ENCODE measurements at regions of chr3 and their contacts with region 1.

Region 1: GRCh38 chr3:119240591-119241434 is at the start of gene B4GALT4:
- DNase-seq: peak; percentile 94
- total RNA-seq, gene B4GALT4: 13.2 TPM

Region 2: DNA sequence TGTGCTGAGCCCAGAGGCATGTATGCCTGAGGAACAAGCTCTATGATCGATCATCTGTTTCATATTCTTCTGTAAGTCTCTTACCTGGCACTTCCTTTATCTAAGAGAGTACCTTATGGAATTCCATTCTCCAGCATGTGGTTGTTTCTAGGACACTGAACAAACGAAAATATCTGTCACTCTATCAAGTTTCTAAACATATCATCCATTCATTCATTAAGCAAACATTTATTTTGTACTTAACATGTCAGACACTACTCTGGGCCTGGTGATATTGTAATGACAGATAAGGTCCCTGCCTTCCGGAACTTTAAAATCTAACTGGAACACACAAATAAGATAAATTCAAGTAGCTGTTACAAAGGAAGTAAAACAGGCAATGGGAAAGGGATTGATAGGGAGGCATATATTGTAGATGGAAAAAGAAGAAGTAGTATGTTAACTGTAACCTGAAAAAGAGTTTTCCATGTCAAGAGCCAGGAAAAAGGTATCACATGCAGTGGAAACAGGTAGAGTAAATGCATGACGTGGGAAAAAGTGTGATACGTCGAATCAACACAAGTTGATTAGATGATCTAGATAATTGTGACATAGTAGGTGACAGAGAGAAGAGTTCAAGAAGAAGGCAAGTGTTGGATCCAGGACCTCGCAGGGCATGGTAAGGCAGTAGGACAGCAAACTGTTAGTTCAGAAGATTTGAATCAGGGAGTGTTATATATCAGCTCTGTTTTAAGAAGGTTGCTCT is 683.1 kb before region 1 on chr3:
- intact Hi-C with region 1: no loop called
- DNase-seq: no peak

Region 3: GRCh38 chr3:118884748-118885206 is 356.0 kb before region 1 on chr3:
- intact Hi-C with region 1: loop called (anchors 5 kb)
- DNase-seq: no peak

Region 4: DNA sequence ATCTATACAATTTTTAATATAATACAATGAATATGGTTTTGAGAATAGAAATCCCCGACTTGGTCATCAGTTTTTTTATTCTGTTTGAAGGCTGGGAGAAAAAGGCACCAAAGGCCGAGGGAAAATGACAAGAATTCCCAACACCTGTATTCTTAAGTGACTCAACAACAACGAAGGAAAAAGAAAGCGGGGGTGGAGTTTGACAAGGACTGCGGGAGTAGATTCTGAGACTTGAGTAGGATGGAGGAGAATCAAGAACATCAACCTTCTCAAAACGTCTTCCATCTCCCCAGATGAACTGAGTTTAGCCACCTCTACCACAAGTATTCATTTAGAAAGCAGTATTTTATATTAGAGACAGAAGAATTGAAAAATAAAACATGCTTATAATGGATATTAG is 313.4 kb before region 1 on chr3:
- intact Hi-C with region 1: no loop called
- DNase-seq: no peak

Region 5: GRCh38 chr3:119145500-119146191 is 95.2 kb before region 1 on chr3 and contains the start of gene TEX55:
- intact Hi-C with region 1: loop called (anchors 5 kb)
- DNase-seq: no peak
- total RNA-seq, gene TEX55: not detected

Region 6: DNA sequence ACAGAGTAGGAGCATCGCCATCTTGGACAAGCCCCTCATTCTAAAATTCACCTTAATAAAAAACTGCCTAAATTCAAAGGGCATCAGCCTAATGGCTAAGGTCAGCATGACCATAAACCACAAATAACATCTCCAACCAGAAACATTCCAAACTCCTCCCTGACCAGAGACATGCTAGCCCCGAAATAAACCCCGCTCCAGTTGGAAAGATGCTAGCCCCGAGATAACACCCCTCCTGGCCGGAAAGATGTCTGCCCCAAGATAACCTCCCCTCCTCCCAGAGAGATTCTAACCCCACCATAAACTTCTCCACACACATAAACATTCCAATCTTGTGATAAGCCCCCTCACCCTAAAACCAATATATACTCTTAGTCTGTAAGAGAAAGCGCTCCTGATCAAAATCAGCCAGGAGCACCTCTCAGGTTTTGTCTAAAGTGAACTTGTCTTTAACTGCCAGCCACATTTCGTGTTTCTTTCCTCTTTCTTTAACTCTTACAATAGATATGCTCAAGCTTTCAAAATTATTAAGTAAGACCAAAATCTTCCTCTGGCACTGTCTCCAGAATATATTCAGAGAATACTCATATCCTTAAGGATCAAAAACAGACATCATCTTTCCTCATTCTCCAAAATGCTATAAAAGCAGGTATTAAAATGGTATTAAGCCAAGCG is 749.3 kb after region 1 on chr3:
- intact Hi-C with region 1: no loop called
- DNase-seq: no peak

Measured in cardiac septum (tissue), 1 donor.